ENCODE measurements at regions of chr10 and their contacts with region 1.

Region 1: DNA sequence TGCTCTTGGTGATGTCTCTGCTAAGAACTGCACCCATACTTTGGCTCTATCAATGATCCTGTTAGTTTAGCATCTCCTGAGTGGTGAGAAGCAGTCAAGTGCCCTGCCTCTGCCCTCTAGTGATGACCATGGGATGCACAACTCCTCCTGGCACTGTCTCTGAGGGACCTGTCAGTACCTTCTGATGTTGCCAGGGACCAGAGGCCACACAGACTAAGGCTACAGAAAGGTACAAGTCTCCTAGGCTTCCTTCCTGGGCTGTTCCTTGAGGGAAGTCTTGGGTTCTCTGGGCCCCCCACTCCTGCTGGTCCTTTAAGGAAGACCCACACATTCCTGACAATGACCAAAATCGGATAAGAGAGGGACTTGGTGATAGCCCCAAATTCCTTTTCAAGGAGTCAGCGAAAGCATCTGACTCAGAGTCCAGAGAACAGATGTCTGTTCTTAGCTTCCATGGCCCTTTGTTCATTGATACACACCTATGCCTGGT is 15.3 kb downstream of the NKX2-3 start:
- DNase-seq: peak; percentile 41
- ATAC-seq: peak; percentile 65
- H3K4me3 Mint-ChIP-seq: no peak overlapping the region
- H3K27ac Mint-ChIP-seq: no peak overlapping the region
- H3K4me1 Mint-ChIP-seq: no peaks in the 10 kb centered on the region
- H3K27me3 Mint-ChIP-seq: peaks cover 47% of the 10 kb centered on the region
- CTCF ChIP-seq: peak; percentile 21

Region 2: GRCh38 chr10:99430451-99431189 is 117.5 kb before region 1 on chr10 and contains the start of gene GOT1:
- CTCF ChIA-PET with region 1: interaction called, 28 read pairs
- POLR2A ChIA-PET with region 1: no interaction called
- intact Hi-C with region 1: loop called (anchors 10 kb)
- DNase-seq: peak; percentile 99
- ATAC-seq: peak; percentile 94
- H3K4me3 Mint-ChIP-seq: peak within 1 kb of the TSS; percentile 100
- H3K27ac Mint-ChIP-seq: peak within 1 kb of the TSS; percentile 99
- H3K4me1 Mint-ChIP-seq: peaks cover 31% of the 10 kb centered on the region
- H3K27me3 Mint-ChIP-seq: no peaks in the 10 kb centered on the region
- CTCF ChIP-seq: no peak
- total RNA-seq, gene GOT1: 48.7 to 51.5 TPM

Region 3: GRCh38 chr10:99560277-99561126 is 12.4 kb after region 1 on chr10:
- CTCF ChIA-PET with region 1: interaction called, 10 read pairs
- POLR2A ChIA-PET with region 1: no interaction called
- intact Hi-C with region 1: no loop called
- DNase-seq: peak; percentile 43
- ATAC-seq: no peak
- H3K4me3 Mint-ChIP-seq: no peak overlapping the region
- H3K27ac Mint-ChIP-seq: no peak overlapping the region
- H3K4me1 Mint-ChIP-seq: peaks cover 11% of the 10 kb centered on the region
- H3K27me3 Mint-ChIP-seq: peaks cover 19% of the 10 kb centered on the region
- CTCF ChIP-seq: peak; percentile 88

Region 4: DNA sequence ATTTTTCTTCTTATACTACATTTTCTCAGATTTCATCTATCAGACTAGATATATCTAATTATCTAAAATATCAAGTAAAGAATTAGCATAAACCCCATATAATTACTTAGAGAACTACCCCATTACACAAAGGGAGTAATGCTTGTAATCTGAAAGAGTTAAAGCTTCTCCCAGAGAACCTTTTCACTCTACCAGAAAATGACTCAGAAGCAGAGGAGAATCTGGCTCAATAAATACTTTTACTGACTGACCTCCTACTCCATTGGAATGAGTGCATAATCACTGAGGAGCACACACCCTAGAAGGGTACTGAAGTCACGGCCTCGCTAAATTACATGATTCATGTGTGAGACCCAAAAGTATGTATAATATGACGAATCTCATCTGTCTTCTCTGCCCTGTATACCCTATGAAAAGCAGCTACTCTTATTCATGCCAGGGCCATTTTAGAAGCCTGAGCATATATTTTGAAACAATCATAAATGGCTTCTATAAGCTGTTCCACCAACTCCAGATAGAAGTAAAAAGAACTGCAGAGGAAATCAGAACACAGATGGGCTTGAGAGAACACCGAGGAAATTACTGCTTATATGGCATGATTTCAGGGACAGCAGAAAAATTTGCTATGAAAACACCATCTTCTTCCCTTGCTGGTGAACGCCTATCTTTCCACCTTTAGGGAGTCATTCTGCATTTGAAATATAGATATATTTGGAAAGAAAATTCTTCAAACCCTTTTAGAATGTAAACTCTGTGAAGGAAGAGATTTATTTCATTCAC is 429.0 kb after region 1 on chr10:
- CTCF ChIA-PET with region 1: no interaction called
- POLR2A ChIA-PET with region 1: no interaction called
- intact Hi-C with region 1: no loop called
- DNase-seq: no peak
- ATAC-seq: no peak
- H3K4me3 Mint-ChIP-seq: no peak overlapping the region
- H3K27ac Mint-ChIP-seq: no peak overlapping the region
- H3K4me1 Mint-ChIP-seq: no peaks in the 10 kb centered on the region
- H3K27me3 Mint-ChIP-seq: no peaks in the 10 kb centered on the region
- CTCF ChIP-seq: no peak